HCT116 (cell line): ENCODE measurements at regions of chr1 and their contacts with region 1.

Region 1: GRCh38 chr1:202184750-202185460 is 8.7 kb upstream of the LGR6 start:
- DNase-seq: peak; percentile 88
- ATAC-seq: peak; percentile 90
- H3K4me3 ChIP-seq: no peak overlapping the region
- H3K27ac ChIP-seq: no peak overlapping the region
- H3K4me1 ChIP-seq: peaks cover 0 to 11% of the 10 kb centered on the region in 2 experiments; a peak in 3 of 4 replicates
- H3K27me3 ChIP-seq: no peaks in the 10 kb centered on the region
- CTCF ChIP-seq: peak; percentile 88 to 96 (median 90)
- POLR2A ChIP-seq: no peak
- RAD21 ChIP-seq: peak; percentile 79

Region 2: GRCh38 chr1:202154766-202155477 is 30.0 kb before region 1 on chr1:
- CTCF ChIA-PET with region 1: interaction called, 10 read pairs
- POLR2A ChIA-PET with region 1: no interaction called
- RAD21 ChIA-PET with region 1: no interaction called
- intact Hi-C with region 1: no loop called
- DNase-seq: peak; percentile 76
- ATAC-seq: peak; percentile 94
- H3K4me3 ChIP-seq: no peak overlapping the region
- H3K27ac ChIP-seq: no peak overlapping the region
- H3K4me1 ChIP-seq: peaks cover 10 to 16% of the 10 kb centered on the region in 2 experiments; a peak in 3 of 4 replicates
- H3K27me3 ChIP-seq: no peaks in the 10 kb centered on the region
- CTCF ChIP-seq: peak; percentile 53 to 82 (median 70); a peak in 5 of 6 replicates
- POLR2A ChIP-seq: no peak
- RAD21 ChIP-seq: peak; percentile 64

Region 3: DNA sequence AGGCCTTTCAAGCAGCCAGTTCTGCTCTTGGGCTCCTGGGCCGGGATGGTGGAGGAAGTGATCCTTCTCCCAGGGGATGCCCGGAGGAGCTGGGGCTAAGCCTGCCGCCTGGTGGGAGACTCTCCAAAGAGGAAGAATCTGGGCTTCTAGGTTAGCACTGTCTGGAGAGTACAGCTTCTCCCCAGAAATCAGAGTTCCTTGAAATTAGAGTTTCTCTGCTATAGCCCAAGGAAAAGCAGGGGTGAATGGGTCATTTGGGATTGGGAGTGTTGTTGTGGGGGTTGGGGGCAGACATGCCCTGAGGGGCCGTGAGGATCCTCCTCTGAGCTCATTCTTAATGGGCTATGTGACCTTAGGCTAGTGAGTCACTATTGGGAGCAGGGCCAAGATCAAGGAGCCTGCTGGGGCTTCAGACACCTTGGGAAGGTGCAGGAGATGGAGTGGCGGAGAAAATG is 15.2 kb after region 1 on chr1:
- CTCF ChIA-PET with region 1: interaction called, 24 read pairs
- POLR2A ChIA-PET with region 1: no interaction called
- RAD21 ChIA-PET with region 1: interaction called, 3 read pairs
- intact Hi-C with region 1: no loop called
- DNase-seq: peak; percentile 52
- ATAC-seq: peak; percentile 81
- H3K4me3 ChIP-seq: 0 out of 4 replicates have a peak overlapping the region, but pooled peaks of 1 of the 2 experiments have one; percentile 3
- H3K27ac ChIP-seq: peak overlapping the region; percentile 33
- H3K4me1 ChIP-seq: peaks cover 25 to 26% of the 10 kb centered on the region in 2 experiments
- H3K27me3 ChIP-seq: no peaks in the 10 kb centered on the region; the same call in 1 of the 2 replicates
- CTCF ChIP-seq: peak in 2 of 3 experiments; percentile 18 to 39; a peak in 3 of 6 replicates
- POLR2A ChIP-seq: no peak
- RAD21 ChIP-seq: no peak

Region 4: GRCh38 chr1:202315576-202316168 is 130.8 kb after region 1 on chr1:
- CTCF ChIA-PET with region 1: interaction called, 31 read pairs
- POLR2A ChIA-PET with region 1: no interaction called
- RAD21 ChIA-PET with region 1: interaction called in 1 of 2 experiments, 6 read pairs
- intact Hi-C with region 1: loop called (anchors 1 kb)
- DNase-seq: peak; percentile 59
- ATAC-seq: peak; percentile 97
- H3K4me3 ChIP-seq: no peak overlapping the region
- H3K27ac ChIP-seq: no peak overlapping the region
- H3K4me1 ChIP-seq: no peaks in the 10 kb centered on the region
- H3K27me3 ChIP-seq: peaks cover 15% of the 10 kb centered on the region; the same call in 1 of the 2 replicates
- CTCF ChIP-seq: peak; percentile 98
- POLR2A ChIP-seq: no peak
- RAD21 ChIP-seq: peak; percentile 99

Region 5: DNA sequence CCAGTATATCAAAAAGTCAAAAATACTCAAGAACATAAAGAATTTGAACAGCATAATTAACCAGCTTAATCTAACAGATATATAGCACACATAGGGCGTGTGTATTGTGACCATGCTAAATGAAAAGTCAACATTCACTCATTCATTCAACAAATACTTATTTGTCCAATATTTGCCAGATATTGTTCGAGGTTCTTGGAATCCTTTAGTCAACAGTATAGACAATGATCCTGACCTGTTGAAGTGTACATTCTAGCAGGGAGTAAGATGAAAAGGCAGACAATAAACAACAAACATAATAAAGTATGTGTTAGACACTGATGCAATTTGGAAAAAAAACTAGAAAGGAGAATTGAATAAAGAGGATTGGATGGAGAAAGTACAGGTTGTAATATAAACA is 338.1 kb after region 1 on chr1:
- CTCF ChIA-PET with region 1: no interaction called
- POLR2A ChIA-PET with region 1: no interaction called
- RAD21 ChIA-PET with region 1: no interaction called
- intact Hi-C with region 1: no loop called
- DNase-seq: no peak
- ATAC-seq: no peak
- H3K4me3 ChIP-seq: no peak overlapping the region
- H3K27ac ChIP-seq: no peak overlapping the region
- H3K4me1 ChIP-seq: no peaks in the 10 kb centered on the region
- H3K27me3 ChIP-seq: no peaks in the 10 kb centered on the region
- CTCF ChIP-seq: no peak
- POLR2A ChIP-seq: no peak
- RAD21 ChIP-seq: no peak

Region 6: DNA sequence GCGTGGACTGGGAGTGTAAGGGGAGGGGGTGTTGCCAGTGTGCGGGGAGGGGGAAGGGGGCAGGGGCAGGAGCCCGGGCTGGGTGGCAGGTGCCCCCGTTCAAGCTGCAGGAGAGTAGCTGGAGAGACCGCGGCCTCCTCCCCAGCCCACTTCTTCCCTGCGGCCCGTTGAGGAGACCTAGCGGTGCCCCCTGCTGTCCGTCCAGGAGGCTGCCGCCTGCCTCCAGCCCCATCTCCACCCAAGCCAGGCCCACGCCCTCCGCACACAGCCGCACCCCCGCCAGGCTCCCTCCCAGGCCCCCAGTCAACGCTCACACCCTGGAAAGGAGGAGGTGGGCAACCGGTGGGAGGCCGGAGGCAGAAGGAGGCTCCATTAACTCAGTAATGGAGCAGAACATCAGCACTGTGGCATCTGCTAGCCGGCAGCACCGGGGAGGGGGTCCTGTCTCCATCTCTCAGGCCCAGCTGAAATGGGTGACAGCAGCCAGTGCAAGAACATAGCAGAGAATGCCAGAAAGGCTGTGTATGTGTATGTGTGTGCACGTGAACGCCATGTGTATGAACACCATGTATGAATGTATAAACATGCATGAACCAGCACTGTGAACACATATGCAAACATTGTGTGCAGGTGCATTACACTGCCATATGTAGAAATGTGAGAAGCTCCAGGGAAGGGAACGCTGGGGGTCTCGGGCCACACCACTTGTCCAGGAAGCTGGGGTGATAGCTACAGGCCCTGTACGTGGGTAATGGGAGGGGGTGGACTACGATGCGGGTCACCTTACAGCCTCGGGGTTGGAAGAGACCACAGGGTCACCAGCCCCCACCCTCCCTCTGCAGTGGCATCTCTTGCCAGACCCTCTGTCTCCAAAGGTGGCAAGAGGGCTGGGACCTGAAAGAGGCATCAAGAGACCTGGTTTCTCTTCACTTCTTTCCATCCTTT is 440.8 kb after region 1 on chr1:
- CTCF ChIA-PET with region 1: no interaction called
- POLR2A ChIA-PET with region 1: no interaction called
- RAD21 ChIA-PET with region 1: no interaction called
- intact Hi-C with region 1: loop called (anchors 10 kb)
- DNase-seq: peak; percentile 26
- ATAC-seq: peak; percentile 98
- H3K4me3 ChIP-seq: no peak overlapping the region
- H3K27ac ChIP-seq: no peak overlapping the region
- H3K4me1 ChIP-seq: peaks cover 0 to 18% of the 10 kb centered on the region in 2 experiments; a peak in 2 of 4 replicates
- H3K27me3 ChIP-seq: no peaks in the 10 kb centered on the region
- CTCF ChIP-seq: peak; percentile 56 to 71 (median 58)
- POLR2A ChIP-seq: no peak
- RAD21 ChIP-seq: peak; percentile 70